ENCODE measurements at regions of chr10 and their contacts with region 1.

Region 1: GRCh38 chr10:128125944-128126764 is at the start of gene MKI67:
- DNase-seq: peak; percentile 94
- H3K4me3 Mint-ChIP-seq: peak within 1 kb of the TSS; percentile 99
- H3K27ac Mint-ChIP-seq: peak within 1 kb of the TSS; percentile 94
- H3K4me1 Mint-ChIP-seq: peaks cover 40% of the 10 kb centered on the region
- H3K27me3 Mint-ChIP-seq: peaks cover 11% of the 10 kb centered on the region
- total RNA-seq, gene MKI67: 253 to 272 TPM

Region 2: GRCh38 chr10:128064108-128064969 is 61.8 kb before region 1 on chr10:
- CTCF ChIA-PET with region 1: no interaction called
- POLR2A ChIA-PET with region 1: interaction called, 22 read pairs
- DNase-seq: peak; percentile 76
- H3K4me3 Mint-ChIP-seq: peak overlapping the region; percentile 51
- H3K27ac Mint-ChIP-seq: peak overlapping the region; percentile 76
- H3K4me1 Mint-ChIP-seq: peaks cover 66% of the 10 kb centered on the region
- H3K27me3 Mint-ChIP-seq: no peaks in the 10 kb centered on the region

Region 3: GRCh38 chr10:128102480-128103228 is 23.5 kb before region 1 on chr10:
- CTCF ChIA-PET with region 1: no interaction called
- POLR2A ChIA-PET with region 1: interaction called, 41 read pairs
- DNase-seq: no peak
- H3K4me3 Mint-ChIP-seq: no peak overlapping the region
- H3K27ac Mint-ChIP-seq: peak overlapping the region; percentile 53
- H3K4me1 Mint-ChIP-seq: peaks cover 38% of the 10 kb centered on the region
- H3K27me3 Mint-ChIP-seq: no peaks in the 10 kb centered on the region

Region 4: DNA sequence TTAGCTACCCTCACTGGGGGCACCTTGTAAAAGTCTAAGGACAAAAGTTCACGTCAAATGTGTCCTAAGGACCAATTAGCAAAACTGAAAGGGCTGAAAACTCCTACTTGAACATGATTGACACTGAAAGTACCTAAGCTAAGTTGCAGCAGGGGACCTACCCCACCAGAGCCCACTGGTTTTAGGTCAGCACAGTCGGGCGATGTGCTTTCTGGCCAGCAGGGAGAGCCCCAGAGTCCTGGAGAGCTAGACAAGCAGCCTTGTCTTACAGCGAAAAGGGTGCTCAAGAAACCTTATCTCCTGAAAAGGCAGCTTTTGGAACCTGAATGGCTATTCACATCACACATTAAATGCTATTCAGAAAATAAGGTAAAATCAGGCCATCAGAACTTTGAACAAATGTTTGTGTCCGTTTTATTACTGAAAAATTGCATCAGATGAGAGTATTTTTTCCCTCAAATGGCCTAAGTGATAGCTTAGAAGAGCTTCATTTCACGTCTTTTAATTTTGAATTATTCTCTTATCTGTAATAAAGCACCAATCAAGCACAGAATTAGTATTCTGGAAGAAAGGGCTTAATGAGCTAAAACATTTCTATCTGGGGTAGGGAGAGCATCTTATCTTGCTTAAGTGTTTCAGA is 52.3 kb after region 1 on chr10:
- CTCF ChIA-PET with region 1: interaction called, 7 read pairs
- POLR2A ChIA-PET with region 1: interaction called, 12 read pairs
- DNase-seq: peak; percentile 66
- H3K4me3 Mint-ChIP-seq: no peak overlapping the region
- H3K27ac Mint-ChIP-seq: no peak overlapping the region
- H3K4me1 Mint-ChIP-seq: peaks cover 41% of the 10 kb centered on the region
- H3K27me3 Mint-ChIP-seq: peaks cover 9% of the 10 kb centered on the region

Measured in activated CD4-positive, alpha-beta memory T cell treated with anti-CD3 and anti-CD28 coated beads, Interleukin-2, amount 10 ng/mL, durations not matched to agents 7 days and 5 days (primary cell).